Pancreas (tissue), 10 donors: ENCODE measurements at regions of chr10 and their contacts with region 1.

Region 1: GRCh38 chr10:22988581-22989360 is 60.9 kb downstream of the ARMC3 start:
- DNase-seq: peak in 4 of 6 donors; percentile 20 to 62 (median 38)
- ATAC-seq: peak; percentile 74 to 94 (median 88)
- H3K4me3 ChIP-seq: no peak overlapping the region
- H3K27ac ChIP-seq: no peak overlapping the region
- H3K4me1 ChIP-seq: no peaks in the 10 kb centered on the region
- H3K27me3 ChIP-seq: no peaks in the 10 kb centered on the region
- CTCF ChIP-seq: peak; percentile 71 to 87 (median 79)

Region 2: DNA sequence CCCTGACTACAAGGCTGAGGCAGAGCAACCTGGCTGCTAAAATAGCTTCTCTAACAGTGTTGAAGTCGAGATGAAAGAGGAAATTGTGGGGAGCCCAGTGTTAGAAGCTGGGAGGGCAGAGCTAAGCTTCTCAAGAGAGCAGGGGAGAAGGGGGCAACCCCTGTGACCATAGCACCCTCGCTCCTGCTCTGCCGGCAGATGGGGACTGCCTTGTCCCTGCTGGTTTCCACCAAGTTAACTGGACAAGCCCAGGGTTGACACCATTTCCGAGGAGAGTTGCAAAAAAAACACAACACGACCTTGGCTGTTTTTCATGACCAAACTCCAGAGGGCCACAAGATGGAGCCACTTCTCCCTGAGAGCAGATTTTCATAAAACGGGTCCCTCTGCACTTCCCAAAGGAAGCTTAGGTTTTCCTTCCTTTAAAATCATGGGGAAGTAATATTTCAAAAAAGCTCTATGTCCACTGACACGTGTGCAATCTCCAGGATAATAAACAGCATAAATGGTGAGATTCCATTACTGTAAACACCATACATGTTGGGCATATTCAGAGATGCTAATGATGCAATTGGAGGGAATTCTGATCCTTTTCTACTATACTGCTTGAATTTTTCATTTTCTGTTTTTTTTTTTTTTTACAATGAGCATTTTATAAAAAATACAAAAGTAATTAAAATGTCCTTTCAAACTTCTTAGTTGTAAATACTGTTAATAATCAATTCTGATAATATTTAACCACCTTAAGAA is 414.8 kb before region 1 on chr10:
- intact Hi-C with region 1: loop called in 1 of 3 experiments (anchors 10 kb)
- DNase-seq: peak in 1 of 6 donors; percentile 27
- ATAC-seq: peak in 3 of 4 donors; percentile 37 to 68 (median 50)
- H3K4me3 ChIP-seq: no peak overlapping the region
- H3K27ac ChIP-seq: no peak overlapping the region
- H3K4me1 ChIP-seq: no peaks in the 10 kb centered on the region
- H3K27me3 ChIP-seq: no peaks in the 10 kb centered on the region
- CTCF ChIP-seq: peak in 2 of 4 donors; percentile 18 to 22

Region 3: GRCh38 chr10:23230582-23230981 is 241.8 kb after region 1 on chr10:
- intact Hi-C with region 1: no loop called
- DNase-seq: no peak
- ATAC-seq: no peak
- H3K4me3 ChIP-seq: no peak overlapping the region
- H3K27ac ChIP-seq: no peak overlapping the region
- H3K4me1 ChIP-seq: no peaks in the 10 kb centered on the region
- H3K27me3 ChIP-seq: no peaks in the 10 kb centered on the region
- CTCF ChIP-seq: no peak